Right ventricle myocardium inferior (tissue), 1 donor: ENCODE measurements at regions of chr12 and their contacts with region 1.

Region 1: GRCh38 chr12:118183705-118184104 is 47.8 kb downstream of the PEBP1 start:
- DNase-seq: no peak
- ATAC-seq: no peak

Region 2: DNA sequence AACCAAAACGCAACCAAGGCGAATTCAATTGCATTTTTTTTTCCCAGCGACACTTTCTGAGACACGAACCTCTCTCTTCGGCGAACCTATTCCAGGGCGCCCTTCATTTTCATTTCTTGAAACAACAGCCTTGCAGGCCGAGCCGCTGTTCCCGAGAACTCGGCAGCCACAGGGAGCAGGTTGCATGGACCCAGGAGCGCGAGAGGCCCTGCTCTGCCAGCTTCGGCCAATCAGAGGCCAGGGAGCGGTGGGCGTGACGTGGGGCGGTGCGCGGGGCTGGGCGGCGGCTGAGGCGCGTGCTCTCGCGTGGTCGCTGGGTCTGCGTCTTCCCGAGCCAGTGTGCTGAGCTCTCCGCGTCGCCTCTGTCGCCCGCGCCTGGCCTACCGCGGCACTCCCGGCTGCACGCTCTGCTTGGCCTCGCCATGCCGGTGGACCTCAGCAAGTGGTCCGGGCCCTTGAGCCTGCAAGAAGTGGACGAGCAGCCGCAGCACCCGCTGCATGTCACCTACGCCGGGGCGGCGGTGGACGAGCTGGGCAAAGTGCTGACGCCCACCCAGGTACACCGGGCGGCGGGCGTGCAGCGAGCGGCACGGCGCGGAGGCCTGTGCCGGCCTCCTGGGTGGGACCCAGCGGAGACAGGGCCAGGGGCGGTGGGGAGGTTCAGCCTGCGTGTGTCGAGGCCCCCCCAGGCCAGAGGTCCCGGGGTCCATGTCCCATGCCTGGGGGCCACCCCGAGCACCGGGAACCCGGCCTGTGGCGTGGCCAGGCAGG is 47.7 kb before region 1 on chr12 and contains the start of gene PEBP1:
- intact Hi-C with region 1: loop called (anchors 5 kb)
- DNase-seq: peak; percentile 98
- ATAC-seq: peak; percentile 99
- total RNA-seq, gene PEBP1: 459 TPM